ENCODE measurements at regions of chr18 and their contacts with region 1.

Region 1: GRCh38 chr18:75727456-75727855 is 300.0 kb upstream of the SMIM21 start:
- DNase-seq: no peak
- ATAC-seq: no peak
- H3K4me3 ChIP-seq: no peak overlapping the region
- H3K27ac ChIP-seq: no peak overlapping the region
- H3K4me1 ChIP-seq: no peaks in the 10 kb centered on the region
- H3K27me3 ChIP-seq: no peaks in the 10 kb centered on the region
- CTCF ChIP-seq: peak; percentile 7 to 36 (median 22)
- POLR2A ChIP-seq: no peak

Region 2: GRCh38 chr18:75784398-75784789 is 56.9 kb after region 1 on chr18:
- intact Hi-C with region 1: loop called in 1 of 2 experiments (anchors 10 kb)
- DNase-seq: no peak
- ATAC-seq: no peak
- H3K4me3 ChIP-seq: no peak overlapping the region
- H3K27ac ChIP-seq: no peak overlapping the region
- H3K4me1 ChIP-seq: no peaks in the 10 kb centered on the region
- H3K27me3 ChIP-seq: no peaks in the 10 kb centered on the region
- CTCF ChIP-seq: no peak
- POLR2A ChIP-seq: no peak

Measured in right lobe of liver (tissue), 6 donors.